Ascending aorta (tissue), 2 donors: ENCODE measurements at regions of chr2 and their contacts with region 1.

Region 1: DNA sequence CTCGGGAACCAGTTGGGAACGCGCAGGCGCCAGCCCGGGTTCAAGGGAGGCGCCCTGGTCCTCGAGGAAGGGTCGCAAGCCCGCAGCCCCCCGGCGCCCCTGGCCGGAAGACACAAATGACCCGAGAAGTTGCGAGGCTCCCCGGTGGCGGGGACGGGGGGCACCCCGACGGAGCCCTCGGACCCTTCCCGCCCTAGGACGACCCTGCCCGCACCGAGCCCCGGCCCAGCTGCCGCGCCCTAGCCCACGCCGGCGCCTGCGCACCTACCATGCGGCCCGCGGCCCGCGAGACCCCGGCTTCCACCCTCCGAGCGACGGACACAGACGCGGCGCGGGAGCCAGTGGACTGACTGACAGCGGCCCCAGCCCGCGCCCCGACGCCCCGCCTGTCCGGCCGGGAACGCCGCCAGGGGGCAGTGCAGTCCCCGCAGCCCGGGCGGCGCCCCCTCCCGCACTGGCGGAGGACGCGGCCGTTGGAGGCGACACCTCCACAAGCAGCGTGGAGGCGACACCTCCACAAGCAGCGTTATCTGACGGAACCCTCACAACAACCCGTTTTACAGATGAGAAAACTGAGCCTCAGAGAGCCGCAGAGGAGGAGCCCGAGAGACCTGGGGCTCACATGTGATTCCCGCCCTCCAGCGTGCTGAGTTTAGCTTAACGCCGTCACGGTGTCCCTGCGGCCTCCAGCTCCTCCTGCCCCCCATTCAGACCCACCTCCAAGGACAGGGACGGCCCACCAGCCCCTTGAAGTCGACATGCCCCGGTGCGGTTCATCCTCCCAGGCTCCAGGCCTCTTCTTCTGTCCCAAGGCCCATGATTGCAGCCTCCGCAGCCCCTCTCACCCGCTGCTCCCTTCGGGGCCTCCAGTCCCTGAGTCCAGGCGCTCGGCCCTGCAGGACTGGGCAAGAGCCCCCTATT is at the start of gene NMUR1:
- DNase-seq: peak in 1 of 2 donors; percentile 75
- H3K4me3 ChIP-seq: peak within 1 kb of the TSS; percentile 50 to 63
- H3K27ac ChIP-seq: no peak within 1 kb of the TSS
- H3K4me1 ChIP-seq: peaks cover 0 to 4% of the 10 kb centered on the region in 2 donors
- H3K27me3 ChIP-seq: no peaks in the 10 kb centered on the region
- CTCF ChIP-seq: peak; percentile 33 to 75 (median 51)
- total RNA-seq, gene NMUR1: 1.8 TPM

Region 2: GRCh38 chr2:231545105-231545902 is 15.0 kb after region 1 on chr2:
- intact Hi-C with region 1: no loop called
- DNase-seq: no peak
- H3K4me3 ChIP-seq: no peak overlapping the region
- H3K27ac ChIP-seq: peak overlapping the region in 1 of 2 donors; percentile 1
- H3K4me1 ChIP-seq: no peaks in the 10 kb centered on the region
- H3K27me3 ChIP-seq: no peaks in the 10 kb centered on the region
- CTCF ChIP-seq: no peak

Region 3: DNA sequence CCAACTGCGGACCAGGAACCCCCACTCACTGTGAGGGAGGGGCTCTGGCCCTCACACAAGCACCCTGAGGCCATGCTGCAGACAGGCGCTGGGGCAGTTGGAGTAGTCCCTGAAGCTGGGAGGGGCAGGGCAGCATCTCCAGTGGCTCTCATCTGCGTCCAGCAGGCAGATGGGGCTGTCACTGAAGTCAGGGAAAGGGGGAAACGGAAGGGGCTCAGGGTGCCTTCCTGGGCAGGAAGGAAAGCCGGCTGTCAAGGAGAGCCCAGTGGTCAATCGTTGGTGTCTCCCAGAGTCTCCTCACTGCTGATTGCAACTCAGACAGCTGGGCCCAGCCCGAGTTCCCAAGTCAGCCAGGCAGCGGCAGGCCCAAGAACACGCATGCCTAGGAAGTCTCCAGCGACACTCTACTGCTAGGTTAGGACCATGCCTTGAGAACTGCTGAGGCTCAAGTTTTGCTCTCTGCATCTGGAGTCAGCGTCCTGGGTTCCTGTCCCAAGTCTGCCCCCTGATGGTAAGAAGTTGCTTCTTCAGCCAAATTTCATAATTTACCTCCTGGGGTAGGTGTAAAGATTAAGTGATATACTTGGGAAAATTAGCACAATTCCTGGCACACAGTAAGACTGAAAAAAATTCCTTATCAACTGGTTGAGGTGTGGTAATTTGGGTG is 27.4 kb after region 1 on chr2:
- intact Hi-C with region 1: loop called (anchors 2 kb)
- DNase-seq: peak; percentile 15 to 78
- H3K4me3 ChIP-seq: no peak overlapping the region
- H3K27ac ChIP-seq: no peak overlapping the region
- H3K4me1 ChIP-seq: no peaks in the 10 kb centered on the region
- H3K27me3 ChIP-seq: no peaks in the 10 kb centered on the region
- CTCF ChIP-seq: peak; percentile 28 to 61 (median 44)